GM12878 (cell line): ENCODE measurements at regions of chr2 and their contacts with region 1.

Region 1: DNA sequence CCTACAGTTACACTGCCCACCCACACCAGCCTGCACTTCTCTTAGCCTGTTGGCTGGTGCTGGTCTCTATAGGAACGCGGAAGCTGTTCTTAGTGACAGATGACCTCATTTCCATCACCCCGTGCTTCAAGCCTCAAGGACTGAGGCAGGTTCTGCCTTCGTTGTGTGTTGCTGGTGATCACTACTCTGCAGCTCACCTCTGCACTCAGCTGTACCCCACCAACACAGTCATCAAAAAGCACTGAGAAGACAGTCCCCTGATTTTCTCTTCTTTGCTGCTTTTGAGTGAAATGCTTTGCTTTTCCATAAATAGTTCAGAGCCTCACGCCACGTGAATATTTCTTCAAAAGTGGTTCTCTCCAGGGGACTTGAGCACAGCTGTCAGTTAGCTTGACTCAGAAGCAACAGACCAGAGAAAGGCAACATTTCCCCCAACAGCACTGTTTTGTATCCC is 225.7 kb upstream of the CCDC150 start:
- DNase-seq: peak; percentile 73
- ATAC-seq: peak; percentile 87
- H3K4me3 ChIP-seq: no peak overlapping the region
- H3K27ac ChIP-seq: peak overlapping the region; percentile 91
- H3K4me1 ChIP-seq: peaks cover 51% of the 10 kb centered on the region
- H3K27me3 ChIP-seq: no peaks in the 10 kb centered on the region
- CTCF ChIP-seq: no peak
- EP300 ChIP-seq: 0 out of 4 replicates have a peak, but pooled peaks of 1 of the 2 experiments have one; percentile 24
- POLR2A ChIP-seq: peak; percentile 74
- RAD21 ChIP-seq: 0 out of 2 replicates have a peak, but pooled peaks have one; percentile 14

Region 2: DNA sequence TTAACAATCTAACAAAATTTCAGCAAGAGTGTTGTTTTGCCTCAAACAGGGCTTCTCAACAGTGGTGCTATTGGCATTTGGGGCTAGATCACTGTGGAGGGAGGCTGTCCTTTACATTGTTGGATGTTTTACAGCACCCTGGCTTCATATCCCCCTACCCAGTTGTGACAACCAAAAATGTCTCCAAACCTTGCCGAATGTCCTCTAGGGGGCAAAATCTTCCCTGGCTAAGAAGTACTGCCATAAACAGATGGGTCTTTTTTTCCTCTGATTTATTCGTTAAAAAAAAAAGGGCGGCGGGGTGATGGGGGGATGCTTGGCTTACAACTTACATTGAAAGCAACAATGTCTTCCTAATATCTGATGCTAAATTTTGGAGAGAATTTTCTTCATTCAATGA is 18.1 kb after region 1 on chr2:
- CTCF ChIA-PET with region 1: interaction called, 10 read pairs
- POLR2A ChIA-PET with region 1: interaction called, 5 read pairs
- RAD21 ChIA-PET with region 1: interaction called, 7 read pairs
- SMC1A ChIA-PET with region 1: interaction called, 99 read pairs
- in situ Hi-C with region 1: no loop called
- intact Hi-C with region 1: no loop called
- DNase-seq: no peak
- ATAC-seq: 0 out of 3 replicates have a peak, but pooled peaks have one; percentile 32
- H3K4me3 ChIP-seq: no peak overlapping the region
- H3K27ac ChIP-seq: no peak overlapping the region
- H3K4me1 ChIP-seq: peaks cover 28% of the 10 kb centered on the region
- H3K27me3 ChIP-seq: no peaks in the 10 kb centered on the region
- CTCF ChIP-seq: peak in 2 of 3 experiments; percentile 6 to 15; a peak in 1 of 6 replicates
- EP300 ChIP-seq: no peak
- POLR2A ChIP-seq: no peak
- RAD21 ChIP-seq: no peak

Region 3: DNA sequence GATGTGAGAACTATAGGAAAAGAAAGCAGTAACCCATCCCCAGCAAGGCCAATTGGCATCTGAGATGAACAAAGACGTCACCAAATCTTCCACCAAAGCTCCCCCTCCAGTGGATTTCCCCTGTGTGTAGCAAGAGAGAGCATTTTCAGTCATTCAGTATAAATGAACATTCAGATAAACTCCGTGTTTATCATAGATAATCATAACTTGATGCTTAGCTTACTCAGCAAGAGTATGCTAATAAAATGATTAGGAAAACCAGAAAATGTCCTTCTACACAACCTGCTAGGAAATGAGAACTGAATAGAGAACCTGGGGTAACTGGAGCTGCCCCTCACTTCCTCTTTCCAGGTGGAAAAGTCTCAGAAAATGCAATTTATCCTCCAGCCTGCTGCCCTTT is 27.7 kb after region 1 on chr2:
- CTCF ChIA-PET with region 1: interaction called, 4 read pairs
- POLR2A ChIA-PET with region 1: interaction called, 10 read pairs
- RAD21 ChIA-PET with region 1: interaction called, 27 read pairs
- SMC1A ChIA-PET with region 1: interaction called, 28 read pairs
- in situ Hi-C with region 1: no loop called
- intact Hi-C with region 1: no loop called
- DNase-seq: no peak
- ATAC-seq: peak; percentile 85
- H3K4me3 ChIP-seq: no peak overlapping the region
- H3K27ac ChIP-seq: peak overlapping the region; percentile 54; the same call in 1 of the 2 replicates
- H3K4me1 ChIP-seq: peaks cover 22% of the 10 kb centered on the region
- H3K27me3 ChIP-seq: no peaks in the 10 kb centered on the region
- CTCF ChIP-seq: no peak
- EP300 ChIP-seq: 0 out of 4 replicates have a peak, but pooled peaks of 1 of the 2 experiments have one; percentile 34
- POLR2A ChIP-seq: no peak
- RAD21 ChIP-seq: 0 out of 2 replicates have a peak, but pooled peaks have one; percentile 11

Region 4: DNA sequence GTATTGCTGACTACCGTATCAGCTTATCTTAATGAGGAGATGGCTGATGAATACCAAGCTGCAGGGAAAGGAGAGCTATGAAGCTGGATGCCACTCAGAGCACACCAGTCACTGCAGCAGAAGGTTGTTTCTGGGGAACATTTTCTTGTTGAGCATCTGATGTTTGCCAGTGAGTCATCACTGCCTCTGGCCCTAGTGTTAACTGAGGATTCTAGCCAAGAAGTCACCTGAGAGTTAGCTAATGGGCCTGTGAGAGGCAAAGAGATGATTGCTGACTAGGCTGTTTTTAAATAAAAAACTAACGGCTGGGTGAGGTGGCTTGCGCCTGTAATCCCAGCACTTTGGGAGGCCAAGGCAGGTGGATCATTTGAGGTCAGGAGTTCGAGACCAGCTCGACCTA is 263.6 kb after region 1 on chr2:
- CTCF ChIA-PET with region 1: no interaction called
- POLR2A ChIA-PET with region 1: no interaction called
- RAD21 ChIA-PET with region 1: no interaction called
- SMC1A ChIA-PET with region 1: no interaction called
- in situ Hi-C with region 1: no loop called
- intact Hi-C with region 1: no loop called
- DNase-seq: no peak
- ATAC-seq: no peak
- H3K4me3 ChIP-seq: no peak overlapping the region
- H3K27ac ChIP-seq: no peak overlapping the region
- H3K4me1 ChIP-seq: no peaks in the 10 kb centered on the region
- H3K27me3 ChIP-seq: no peaks in the 10 kb centered on the region
- CTCF ChIP-seq: no peak
- EP300 ChIP-seq: no peak
- POLR2A ChIP-seq: no peak
- RAD21 ChIP-seq: no peak